Lower leg skin (tissue), 4 donors: ENCODE measurements at regions of chr3 and their contacts with region 1.

Region 1: GRCh38 chr3:196684548-196685407 is 27.3 kb downstream of the CEP19 start:
- DNase-seq: peak; percentile 60 to 90
- H3K4me3 ChIP-seq: no peak overlapping the region
- CTCF ChIP-seq: peak in 1 of 3 donors; percentile 92
- POLR2A ChIP-seq: no peak

Region 2: DNA sequence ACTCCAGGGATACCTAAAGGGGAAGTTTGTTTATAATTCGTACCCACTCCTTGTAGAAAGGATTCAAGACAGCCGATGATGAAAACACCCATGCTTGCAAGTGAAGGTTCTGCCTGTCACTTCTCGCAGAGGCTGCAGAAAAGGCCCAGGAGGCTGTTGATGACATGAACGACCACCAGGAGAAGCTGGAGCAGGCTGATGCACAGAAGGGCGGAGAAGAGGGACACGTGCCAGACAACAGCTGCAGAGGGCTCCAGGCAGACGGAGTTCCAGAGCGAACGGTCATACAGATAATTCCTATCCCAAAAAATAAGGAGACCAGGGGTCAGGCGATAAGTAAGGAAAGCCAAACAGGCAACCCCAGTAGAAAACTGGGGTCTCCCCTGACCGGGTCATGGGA is 361.1 kb before region 1 on chr3:
- intact Hi-C with region 1: no loop called
- DNase-seq: no peak
- H3K4me3 ChIP-seq: no peak overlapping the region
- CTCF ChIP-seq: no peak
- POLR2A ChIP-seq: no peak

Region 3: GRCh38 chr3:196547067-196547466 is 137.7 kb before region 1 on chr3:
- intact Hi-C with region 1: loop called (anchors 10 kb)
- DNase-seq: no peak
- H3K4me3 ChIP-seq: no peak overlapping the region
- CTCF ChIP-seq: no peak
- POLR2A ChIP-seq: no peak

Region 4: GRCh38 chr3:196611761-196612483 is 72.9 kb before region 1 on chr3:
- intact Hi-C with region 1: loop called (anchors 5 kb)
- DNase-seq: no peak
- H3K4me3 ChIP-seq: no peak overlapping the region
- CTCF ChIP-seq: no peak
- POLR2A ChIP-seq: no peak